Activated T-helper 1 cell treated with anti-CD3 and anti-CD28 coated beads, Interleukin-12 subunit alpha, Interleukin-12 subunit beta, Interleukin-2, Interleukin-4 antibody, amounts not matched to agents 30 ng/mL and 10 ng/mL and 1 ng/mL, durations not matched to agents 14 hours and 24 hours and 36 hours (primary cell): ENCODE measurements at regions of chr2 and their contacts with region 1.

Region 1: DNA sequence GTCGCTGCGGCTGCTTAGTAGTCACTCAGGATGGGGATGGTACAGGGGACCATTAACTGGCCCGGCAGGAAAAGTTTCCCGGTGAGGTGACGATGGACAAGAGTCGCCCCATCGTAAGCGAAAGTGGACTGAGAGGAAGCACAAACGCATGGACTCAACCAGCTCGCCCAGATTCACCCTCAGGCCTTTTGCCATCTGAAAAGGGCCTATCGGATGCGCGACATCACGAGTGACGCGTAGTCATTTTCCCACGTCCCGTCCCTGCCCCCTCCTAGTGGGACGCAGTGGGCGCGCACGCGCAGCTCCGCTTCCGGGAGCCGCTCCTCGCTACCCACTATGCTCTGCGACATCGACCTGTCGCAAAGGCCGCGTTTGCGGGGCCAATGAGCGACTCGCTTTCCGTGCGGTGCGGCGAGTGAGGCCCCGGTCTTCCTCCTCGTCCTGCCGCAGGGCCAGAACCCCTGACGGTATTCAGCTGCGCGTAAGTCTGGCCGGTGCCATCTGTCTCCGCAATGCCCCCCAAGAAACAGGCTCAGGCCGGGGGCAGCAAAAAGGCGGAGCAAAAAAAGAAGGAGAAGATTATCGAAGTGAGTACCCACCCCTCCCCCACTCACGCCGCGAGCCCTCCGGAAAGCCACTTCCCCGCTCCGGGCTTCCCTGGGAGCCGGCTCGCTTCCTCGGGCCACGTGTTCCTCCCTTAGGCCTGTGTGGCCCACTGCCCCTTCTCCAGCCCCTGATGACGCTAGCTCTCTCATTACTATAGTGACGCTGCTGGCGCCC is at the start of gene ZC3H15:
- DNase-seq: peak; percentile 96
- H3K4me3 Mint-ChIP-seq: peak within 1 kb of the TSS; percentile 98
- H3K27ac Mint-ChIP-seq: peak within 1 kb of the TSS; percentile 98
- H3K4me1 Mint-ChIP-seq: peaks cover 61% of the 10 kb centered on the region
- H3K27me3 Mint-ChIP-seq: no peaks in the 10 kb centered on the region
- total RNA-seq, gene ZC3H15: 107 and 111 TPM in 2 replicates

Region 2: GRCh38 chr2:186503848-186504606 is 18.0 kb after region 1 on chr2:
- intact Hi-C with region 1: loop called (anchors 2 kb)
- DNase-seq: no peak
- H3K4me3 Mint-ChIP-seq: no peak overlapping the region
- H3K27ac Mint-ChIP-seq: no peak overlapping the region
- H3K4me1 Mint-ChIP-seq: peaks cover 13% of the 10 kb centered on the region
- H3K27me3 Mint-ChIP-seq: no peaks in the 10 kb centered on the region

Region 3: DNA sequence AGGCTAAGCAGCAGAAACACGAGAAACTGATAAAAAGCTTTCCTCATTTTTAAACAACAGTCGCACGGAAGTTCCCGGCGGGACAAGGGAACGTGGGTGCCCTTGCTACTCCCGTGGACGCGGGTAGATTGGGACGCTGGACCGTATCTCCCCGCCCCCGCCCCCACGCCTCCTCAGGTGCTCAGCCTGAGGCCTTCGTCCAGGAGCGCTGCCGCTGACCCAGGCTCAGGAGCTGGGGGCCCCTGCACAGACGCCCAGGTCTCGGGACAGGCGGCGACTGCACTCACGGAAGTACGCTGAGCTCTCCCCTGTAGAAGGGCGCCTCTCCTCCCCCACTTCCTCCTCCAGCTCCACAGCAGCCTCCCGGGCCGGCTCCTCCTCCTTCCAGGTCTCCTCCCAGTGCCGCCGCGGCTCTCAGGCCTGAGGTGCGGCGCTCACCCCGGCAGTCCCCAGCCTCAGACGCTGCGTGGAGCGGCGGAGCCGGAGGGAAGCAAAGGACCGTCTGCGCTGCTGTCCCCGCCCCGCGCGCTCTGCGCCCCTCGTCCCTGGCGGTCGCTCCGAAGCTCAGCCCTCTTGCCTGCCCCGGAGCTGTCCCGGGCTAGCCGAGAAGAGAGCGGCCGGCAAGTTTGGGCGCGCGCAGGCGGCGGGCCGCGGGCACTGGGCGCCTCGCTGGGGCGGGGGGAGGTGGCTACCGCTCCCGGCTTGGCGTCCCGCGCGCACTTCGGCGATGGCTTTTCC is 103.7 kb after region 1 on chr2 and contains the start of gene ITGAV:
- intact Hi-C with region 1: loop called (anchors 1 kb)
- DNase-seq: peak; percentile 80
- H3K4me3 Mint-ChIP-seq: peak within 1 kb of the TSS; percentile 93
- H3K27ac Mint-ChIP-seq: peak within 1 kb of the TSS; percentile 91
- H3K4me1 Mint-ChIP-seq: peaks cover 34% of the 10 kb centered on the region
- H3K27me3 Mint-ChIP-seq: peaks cover 6% of the 10 kb centered on the region
- total RNA-seq, gene ITGAV: 8.4 and 8.7 TPM in 2 replicates

Region 4: DNA sequence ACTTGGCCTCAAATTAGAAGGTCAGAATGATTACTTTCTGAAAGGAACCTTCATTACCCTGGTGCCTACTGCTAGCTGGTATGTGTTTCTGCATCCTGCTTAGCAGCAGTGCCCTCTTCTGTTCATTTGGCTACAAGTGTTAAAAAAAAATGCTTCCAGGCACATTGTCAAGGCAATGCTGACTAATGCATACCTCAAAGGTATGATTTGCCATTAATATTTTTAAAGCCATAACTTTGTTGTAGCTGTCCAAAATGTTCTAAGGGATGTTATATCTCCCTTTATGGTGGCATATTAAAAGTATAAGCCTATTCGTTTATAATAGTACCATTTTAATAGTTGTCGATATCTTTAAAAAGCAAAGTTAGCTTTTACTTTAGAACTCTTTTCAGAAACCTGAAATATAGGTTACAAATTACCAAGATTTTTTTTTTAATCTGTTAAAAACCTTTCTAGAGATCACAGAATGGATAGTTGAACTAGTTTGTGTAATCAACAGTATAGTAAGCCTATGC is 155.8 kb after region 1 on chr2:
- intact Hi-C with region 1: loop called (anchors 1 kb)
- DNase-seq: peak; percentile 26
- H3K4me3 Mint-ChIP-seq: no peak overlapping the region
- H3K27ac Mint-ChIP-seq: no peak overlapping the region
- H3K4me1 Mint-ChIP-seq: peaks cover 21% of the 10 kb centered on the region
- H3K27me3 Mint-ChIP-seq: no peaks in the 10 kb centered on the region

Region 5: DNA sequence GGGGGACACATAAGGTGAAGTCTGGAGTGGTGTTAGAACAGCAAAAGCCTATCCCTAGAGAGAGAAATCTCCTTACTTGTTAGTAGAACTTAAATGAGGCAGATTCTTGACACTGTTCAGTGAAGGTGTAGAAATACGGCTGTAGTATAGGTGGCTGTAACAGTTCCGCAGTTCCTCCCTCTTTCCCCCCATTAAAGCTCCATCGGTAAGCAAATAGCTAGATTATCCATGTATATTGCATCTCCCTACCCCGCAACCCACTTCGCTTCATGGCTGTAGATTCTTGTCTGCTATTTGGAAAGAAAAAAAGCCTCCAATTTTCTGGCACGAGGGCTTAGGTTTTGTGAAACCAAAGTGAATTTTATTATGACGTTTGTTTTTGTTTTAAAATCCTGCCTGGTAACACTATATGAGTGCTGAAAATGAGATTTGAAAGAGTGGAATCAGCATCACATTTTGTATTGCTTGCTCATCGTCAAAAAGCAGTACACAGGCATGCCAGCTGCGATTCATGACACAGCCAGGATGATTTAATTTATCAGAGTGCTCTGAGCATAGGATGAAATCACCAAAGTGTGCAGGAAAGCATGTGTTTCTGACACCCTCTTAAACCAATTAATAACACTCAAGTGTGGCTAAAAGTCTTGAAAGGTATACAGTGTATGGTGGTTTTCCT is 209.2 kb after region 1 on chr2:
- intact Hi-C with region 1: loop called (anchors 1 kb)
- DNase-seq: no peak
- H3K4me3 Mint-ChIP-seq: no peak overlapping the region
- H3K27ac Mint-ChIP-seq: no peak overlapping the region
- H3K4me1 Mint-ChIP-seq: no peaks in the 10 kb centered on the region
- H3K27me3 Mint-ChIP-seq: peaks cover 57% of the 10 kb centered on the region

Region 6: GRCh38 chr2:187581125-187581896 is 1095.2 kb after region 1 on chr2:
- intact Hi-C with region 1: loop called (anchors 10 kb)
- DNase-seq: peak; percentile 5
- H3K4me3 Mint-ChIP-seq: no peak overlapping the region
- H3K27ac Mint-ChIP-seq: no peak overlapping the region
- H3K4me1 Mint-ChIP-seq: peaks cover 13% of the 10 kb centered on the region
- H3K27me3 Mint-ChIP-seq: peaks cover 2% of the 10 kb centered on the region